ENCODE measurements at regions of chr17 and their contacts with region 1.

Region 1: GRCh38 chr17:28227316-28228125 is 91.5 kb upstream of the TMEM97 start:
- DNase-seq: peak in 1 of 5 donors; percentile 13
- H3K4me3 ChIP-seq: peak overlapping the region in 1 of 2 donors; percentile 4
- H3K4me3 Mint-ChIP-seq: peak overlapping the region; percentile 35 to 85 (median 73)
- H3K27ac ChIP-seq: no peak overlapping the region
- H3K27ac Mint-ChIP-seq: no peak overlapping the region
- H3K4me1 ChIP-seq: peaks cover 10% of the 10 kb centered on the region
- H3K4me1 Mint-ChIP-seq: peaks cover 4 to 14% (median 10%) of the 10 kb centered on the region in 4 donors
- H3K27me3 ChIP-seq: peaks cover 19% of the 10 kb centered on the region
- H3K27me3 Mint-ChIP-seq: peaks cover 35 to 37% of the 10 kb centered on the region in 2 donors

Region 2: DNA sequence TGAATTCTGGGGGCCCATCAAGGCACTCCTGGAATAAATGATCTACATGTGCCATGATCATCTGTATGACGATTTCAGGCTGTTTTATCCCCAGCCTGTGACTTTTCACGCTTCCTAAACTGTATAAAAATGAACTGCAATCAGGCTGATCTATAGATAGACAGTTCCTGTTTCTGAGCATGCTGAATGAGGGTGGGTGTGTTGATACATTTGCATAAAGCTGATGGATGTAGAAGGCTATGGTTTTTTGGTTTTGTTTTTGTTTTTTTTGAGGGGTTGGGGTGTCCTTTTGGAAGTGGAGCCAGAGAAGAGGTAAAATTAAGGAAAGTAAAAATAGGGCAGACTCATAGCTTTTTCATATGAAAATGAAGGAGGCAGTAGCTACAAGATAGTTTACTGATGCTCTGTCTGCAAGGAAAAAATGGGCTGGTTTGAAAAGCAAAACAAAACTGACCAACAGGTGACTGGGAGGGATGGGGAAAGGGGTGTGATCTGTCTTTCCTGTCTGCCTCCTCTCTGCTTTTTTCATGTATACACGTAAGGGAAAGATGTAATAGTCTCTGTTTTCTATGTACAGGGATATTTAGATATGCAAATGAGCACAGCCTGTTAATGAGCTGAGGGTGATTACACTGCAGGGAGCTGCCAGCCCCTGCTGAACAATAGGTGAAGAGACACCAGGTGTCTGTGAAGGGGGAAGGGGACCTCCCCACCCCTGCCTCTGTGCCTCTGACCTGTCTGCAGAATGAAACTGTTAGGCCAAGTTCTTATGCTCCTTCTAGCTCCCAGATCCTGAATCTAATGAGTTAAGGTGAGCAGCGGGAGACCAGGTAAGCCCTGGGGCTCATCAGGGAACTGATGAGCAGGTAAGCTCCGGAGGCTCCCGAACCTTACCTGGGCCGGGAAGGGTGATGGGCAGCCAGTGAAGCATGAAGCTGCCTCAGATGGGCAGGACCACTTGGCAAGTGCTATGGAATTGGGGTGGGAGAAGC is 287.8 kb before region 1 on chr17:
- CTCF ChIA-PET with region 1: no interaction called
- POLR2A ChIA-PET with region 1: no interaction called
- intact Hi-C with region 1: no loop called
- DNase-seq: no peak
- H3K4me3 ChIP-seq: no peak overlapping the region
- H3K4me3 Mint-ChIP-seq: no peak overlapping the region
- H3K27ac ChIP-seq: no peak overlapping the region
- H3K27ac Mint-ChIP-seq: no peak overlapping the region
- H3K4me1 ChIP-seq: no peaks in the 10 kb centered on the region
- H3K4me1 Mint-ChIP-seq: peaks cover 0 to 1% (median 0%) of the 10 kb centered on the region in 4 donors
- H3K27me3 ChIP-seq: no peaks in the 10 kb centered on the region
- H3K27me3 Mint-ChIP-seq: peaks cover 12 to 16% of the 10 kb centered on the region in 2 donors

Region 3: DNA sequence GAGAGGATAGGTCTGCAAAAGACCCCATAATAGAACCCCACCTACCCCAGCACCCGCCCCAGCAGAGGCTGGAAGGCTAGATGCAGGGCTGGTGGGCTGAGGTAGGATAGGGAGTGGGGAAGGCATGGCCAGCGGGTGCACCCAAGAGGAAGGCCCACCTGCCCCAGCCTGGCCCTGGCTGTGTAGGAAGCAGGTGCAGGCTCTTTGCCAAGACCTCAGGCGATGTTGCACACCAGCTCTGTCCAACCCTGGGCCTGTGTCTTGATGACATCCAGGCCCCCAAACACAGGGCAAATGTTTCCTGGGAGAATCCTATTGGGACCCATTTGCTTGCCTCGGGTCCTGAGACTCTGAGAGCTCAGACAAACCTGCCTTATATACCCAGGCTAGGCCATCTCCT is 312.7 kb after region 1 on chr17:
- CTCF ChIA-PET with region 1: no interaction called
- POLR2A ChIA-PET with region 1: no interaction called
- intact Hi-C with region 1: loop called (anchors 5 kb)
- DNase-seq: no peak
- H3K4me3 ChIP-seq: no peak overlapping the region
- H3K4me3 Mint-ChIP-seq: no peak overlapping the region
- H3K27ac ChIP-seq: no peak overlapping the region
- H3K27ac Mint-ChIP-seq: peak overlapping the region in 3 of 7 donors; percentile 52 to 70 (median 60)
- H3K4me1 ChIP-seq: no peaks in the 10 kb centered on the region
- H3K4me1 Mint-ChIP-seq: peaks cover 0 to 2% (median 0%) of the 10 kb centered on the region in 4 donors
- H3K27me3 ChIP-seq: no peaks in the 10 kb centered on the region
- H3K27me3 Mint-ChIP-seq: no peaks in the 10 kb centered on the region